Dorsolateral prefrontal cortex (tissue), 120 donors: ENCODE measurements at regions of chr13 and their contacts with region 1.

Region 1: DNA sequence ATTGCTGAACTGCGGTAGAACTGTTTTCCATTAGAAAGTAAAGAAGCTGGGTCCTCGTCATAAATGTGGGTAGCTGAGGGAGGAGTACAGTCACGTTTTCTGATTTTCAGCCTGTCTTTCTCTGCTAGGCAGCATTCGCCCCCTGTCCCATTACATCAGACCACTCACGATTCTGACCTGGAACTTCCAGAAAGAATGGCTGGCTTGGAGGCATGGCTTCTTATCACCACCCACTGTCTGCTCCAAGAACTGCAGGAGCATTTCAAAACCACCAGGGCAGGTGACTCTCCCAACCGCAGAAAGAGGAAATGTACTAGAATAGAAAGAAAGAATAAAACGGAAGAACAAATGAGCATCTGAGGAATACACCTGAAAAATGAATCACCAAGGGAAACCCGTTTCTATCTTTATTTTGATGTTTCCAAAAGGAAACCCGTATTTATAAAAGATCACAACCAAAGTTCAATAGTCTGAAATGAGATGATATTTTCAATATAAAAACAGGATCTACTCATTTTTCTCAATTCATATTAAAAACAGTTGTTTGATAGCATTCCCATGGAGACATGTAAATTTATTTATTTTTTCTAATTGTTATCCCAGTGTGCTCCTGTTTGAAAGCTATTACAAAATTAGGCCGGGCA is 22.1 kb upstream of the POMP start:
- DNase-seq: peak in 7 of 10 donors; percentile 26 to 61 (median 51)
- H3K4me3 ChIP-seq: no peak overlapping the region
- H3K27ac ChIP-seq: peak overlapping the region in 15 of 59 donors; percentile 1 to 72 (median 48)
- H3K27me3 ChIP-seq: no peaks in the 10 kb centered on the region
- CTCF ChIP-seq: peak; percentile 55 to 91 (median 81)

Region 2: DNA sequence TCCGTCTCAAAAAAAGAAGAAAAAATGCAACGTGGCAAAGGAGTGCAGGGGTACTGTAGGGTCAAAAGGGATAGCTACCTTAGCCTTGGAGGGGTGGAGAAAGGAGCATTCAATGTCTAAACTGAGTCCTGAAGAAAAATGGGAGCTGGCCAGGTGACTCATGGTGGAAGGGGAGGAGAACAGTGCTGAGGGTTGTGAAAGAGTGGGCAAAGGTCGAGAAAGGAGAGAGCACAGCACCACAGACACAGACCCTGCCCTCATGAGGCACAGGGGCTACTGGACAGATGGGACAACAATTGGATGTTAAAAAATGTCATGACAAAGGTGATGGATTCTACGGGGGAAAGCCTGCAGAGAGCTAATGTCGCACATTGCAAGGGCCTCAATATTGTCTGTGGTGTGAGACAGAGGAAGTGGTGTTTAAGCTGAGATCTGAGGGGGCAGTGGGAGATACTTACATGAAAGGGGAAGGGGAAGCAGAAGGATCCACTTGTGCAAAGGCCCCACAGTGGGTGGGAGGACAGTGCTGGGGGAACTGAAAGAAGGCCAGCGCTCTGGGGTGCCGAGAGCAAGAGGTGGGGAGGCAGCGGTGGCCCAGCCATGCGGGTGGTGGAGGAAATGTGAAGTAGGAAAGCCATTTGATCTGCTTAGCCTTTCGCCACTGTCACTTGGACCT is 605.4 kb before region 1 on chr13:
- intact Hi-C with region 1: no loop called
- DNase-seq: peak in 6 of 10 donors; percentile 6 to 48 (median 34)
- H3K4me3 ChIP-seq: no peak overlapping the region
- H3K27ac ChIP-seq: no peak overlapping the region
- H3K27me3 ChIP-seq: peaks cover 0 to 7% (median 0%) of the 10 kb centered on the region in 45 donors
- CTCF ChIP-seq: no peak

Region 3: DNA sequence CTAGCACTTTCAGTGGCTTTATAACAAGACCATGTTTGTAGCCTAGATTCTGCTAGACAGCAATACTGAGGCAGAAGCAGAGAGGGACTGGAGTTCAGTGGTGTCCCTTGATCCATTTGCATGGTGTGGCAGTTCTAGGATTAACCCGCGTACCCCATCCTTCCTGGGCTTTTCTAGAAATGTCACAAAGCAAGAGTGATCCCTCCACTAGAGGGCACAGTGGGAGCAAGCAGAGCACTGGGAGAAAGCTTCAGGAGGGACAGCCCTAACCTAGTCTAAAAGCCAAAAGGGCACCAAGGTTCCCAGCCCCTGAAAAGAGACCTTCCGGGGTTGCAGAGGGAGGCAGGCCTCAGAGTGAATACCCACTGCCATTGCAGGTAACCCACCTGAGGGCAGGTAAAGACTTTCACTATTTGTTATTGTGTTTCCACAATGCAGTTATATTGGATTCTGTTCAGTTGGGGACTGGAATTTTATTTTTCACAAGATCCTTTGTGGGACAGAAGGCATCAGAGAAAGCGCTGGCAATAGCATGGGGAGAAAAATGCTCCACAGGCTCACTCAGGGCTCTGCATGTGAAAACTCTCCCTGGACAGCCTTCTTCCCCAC is 312.5 kb before region 1 on chr13:
- intact Hi-C with region 1: loop called (anchors 2 to 10 kb)
- DNase-seq: peak in 4 of 10 donors; percentile 16 to 57 (median 42)
- H3K4me3 ChIP-seq: no peak overlapping the region
- H3K27ac ChIP-seq: no peak overlapping the region
- H3K27me3 ChIP-seq: peaks cover 0 to 6% (median 0%) of the 10 kb centered on the region in 45 donors
- CTCF ChIP-seq: peak; percentile 39 to 74 (median 64)

Region 4: GRCh38 chr13:28489524-28489931 is 147.3 kb before region 1 on chr13:
- intact Hi-C with region 1: loop called in 1 of 2 experiments (anchors 10 kb)
- DNase-seq: no peak
- H3K4me3 ChIP-seq: peak overlapping the region in 32 of 59 donors; percentile 6 to 68 (median 42)
- H3K27ac ChIP-seq: no peak overlapping the region
- H3K27me3 ChIP-seq: peaks cover 5 to 91% (median 60%) of the 10 kb centered on the region in 45 donors
- CTCF ChIP-seq: no peak

Region 5: GRCh38 chr13:28531077-28531844 is 105.5 kb before region 1 on chr13:
- intact Hi-C with region 1: loop called in 1 of 2 experiments (anchors 10 kb)
- DNase-seq: peak in 1 of 10 donors; percentile 30
- H3K4me3 ChIP-seq: peak overlapping the region; percentile 15 to 70 (median 49)
- H3K27ac ChIP-seq: peak overlapping the region in 20 of 59 donors; percentile 2 to 69 (median 31)
- H3K27me3 ChIP-seq: peaks cover 0 to 67% (median 31%) of the 10 kb centered on the region in 45 donors
- CTCF ChIP-seq: no peak

Region 6: DNA sequence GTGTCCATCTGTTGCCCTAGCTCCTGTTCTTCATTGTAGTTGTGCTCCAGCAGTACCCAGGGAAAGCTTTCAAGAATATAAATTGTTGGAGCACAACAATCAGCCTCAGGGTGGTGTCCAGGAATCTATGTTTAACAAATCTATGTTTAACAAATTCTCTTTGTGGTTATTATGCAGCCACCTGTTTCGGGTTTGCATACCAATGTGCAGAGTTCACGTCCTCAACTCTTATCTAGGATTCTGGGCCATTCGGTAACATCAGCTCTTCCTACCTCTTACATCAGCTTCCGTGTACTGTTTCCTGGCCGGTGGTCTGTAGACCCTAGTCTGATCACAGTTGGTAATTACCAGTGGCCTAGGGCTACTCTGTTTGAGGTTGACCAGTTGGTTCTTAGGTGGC is 200.3 kb after region 1 on chr13:
- intact Hi-C with region 1: no loop called
- DNase-seq: no peak
- H3K4me3 ChIP-seq: no peak overlapping the region
- H3K27ac ChIP-seq: no peak overlapping the region
- H3K27me3 ChIP-seq: no peaks in the 10 kb centered on the region
- CTCF ChIP-seq: no peak

Region 7: DNA sequence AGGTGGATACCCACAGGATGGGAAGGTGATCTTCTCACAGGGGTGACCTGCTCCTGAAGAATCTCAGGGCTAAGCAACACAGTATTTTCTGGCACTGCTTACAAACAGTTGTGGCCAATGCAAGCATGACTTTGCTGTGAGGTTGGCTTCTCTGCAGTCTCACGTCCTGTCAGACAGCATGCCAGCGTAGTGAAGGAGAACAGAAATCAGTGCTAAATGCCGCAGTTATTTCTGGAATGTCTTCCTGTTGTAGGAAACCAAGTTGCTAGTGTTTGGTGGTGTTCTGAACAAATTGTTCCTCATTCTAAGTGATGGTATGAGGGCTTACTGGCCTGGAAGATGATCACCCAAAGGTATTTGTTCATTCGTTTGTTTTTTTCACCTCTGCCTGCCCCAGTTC is 503.5 kb after region 1 on chr13:
- intact Hi-C with region 1: no loop called
- DNase-seq: peak in 2 of 10 donors; percentile 26 to 45
- H3K4me3 ChIP-seq: peak overlapping the region in 4 of 59 donors; percentile 2 to 42 (median 24)
- H3K27ac ChIP-seq: peak overlapping the region in 5 of 59 donors; percentile 24 to 53 (median 41)
- H3K27me3 ChIP-seq: no peaks in the 10 kb centered on the region
- CTCF ChIP-seq: no peak